ENCODE measurements at regions of chr14 and their contacts with region 1.

Region 1: DNA sequence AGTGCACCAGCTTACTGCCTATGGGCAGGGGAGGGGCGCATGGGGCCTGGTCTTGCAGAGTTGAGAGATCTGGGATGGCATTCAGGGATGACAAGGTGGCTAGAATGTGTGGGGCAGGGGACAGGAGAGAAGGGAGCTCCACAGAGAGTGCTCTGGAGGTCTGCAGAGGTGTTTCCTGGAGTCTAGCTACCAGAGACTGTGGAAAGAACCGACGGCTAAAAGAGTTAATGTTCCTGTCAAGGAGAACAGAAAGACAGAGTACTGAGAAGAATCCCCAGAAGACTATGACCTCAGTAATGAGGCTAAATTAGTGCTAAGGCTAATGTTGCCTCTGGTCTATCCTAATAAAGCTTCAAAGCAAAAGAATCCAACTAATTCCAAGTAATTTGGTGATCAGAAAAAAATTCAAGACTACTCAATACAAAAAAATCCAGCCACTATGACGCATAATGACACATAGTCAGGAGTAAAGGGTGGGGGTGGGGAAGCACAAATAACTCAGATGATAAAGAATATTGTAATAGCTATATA is 44.7 kb downstream of the FERMT2 start:
- DNase-seq: no peak

Region 2: GRCh38 chr14:52328276-52328675 is 577.9 kb before region 1 on chr14:
- intact Hi-C with region 1: no loop called
- DNase-seq: no peak

Region 3: DNA sequence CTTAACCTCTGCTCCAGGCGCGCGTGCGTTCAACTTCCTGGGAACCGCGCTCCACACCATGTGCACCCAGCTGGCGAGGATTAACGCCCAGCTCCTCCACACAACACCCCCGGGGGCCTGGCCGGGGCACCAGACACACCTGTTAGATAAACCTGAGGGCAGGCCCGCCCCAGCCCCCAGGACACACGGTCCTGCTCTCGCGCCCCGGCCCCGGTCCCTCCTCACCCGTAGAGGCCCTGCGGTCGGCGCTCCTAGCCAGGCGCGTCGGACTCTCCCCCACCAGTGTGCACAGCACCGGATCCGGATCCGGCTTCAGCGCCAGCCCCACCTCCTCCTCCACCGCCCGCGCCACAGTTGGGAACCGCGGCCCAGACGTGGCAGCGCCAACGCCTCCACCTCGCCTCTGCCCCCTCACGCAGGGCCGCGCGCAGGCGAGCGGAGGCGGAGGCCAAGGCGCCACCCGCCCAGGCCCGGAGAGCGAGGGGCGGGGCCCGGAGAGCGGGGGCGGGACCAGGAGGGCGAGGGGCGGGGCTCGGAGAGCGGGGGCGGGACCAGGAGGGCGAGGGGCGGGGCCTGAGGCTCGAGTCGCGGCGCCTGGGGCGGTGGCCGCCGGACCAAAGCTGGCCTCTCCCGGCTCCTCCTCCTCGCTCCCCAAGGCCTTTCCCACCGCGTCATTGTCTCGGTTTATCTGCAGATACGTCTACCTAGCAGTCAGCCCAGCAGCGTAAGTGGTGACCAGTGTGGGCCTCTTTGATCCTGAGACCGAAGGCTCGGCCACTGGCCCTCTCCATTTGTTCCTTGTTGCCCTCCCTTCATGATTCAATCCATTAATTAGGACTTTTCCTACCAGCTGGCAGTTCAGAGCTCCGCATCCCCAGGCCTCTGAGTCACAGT is 114.7 kb before region 1 on chr14 and contains the start of gene GNPNAT1:
- intact Hi-C with region 1: no loop called
- DNase-seq: peak; percentile 96
- total RNA-seq, gene GNPNAT1: 18.3 to 34.4 TPM

Region 4: GRCh38 chr14:52934762-52935161 is 28.6 kb after region 1 on chr14:
- intact Hi-C with region 1: loop called in 1 of 2 experiments (anchors 1 kb)
- DNase-seq: no peak

Region 5: GRCh38 chr14:52950898-52951689 is 45.0 kb after region 1 on chr14 and contains the start of gene FERMT2:
- intact Hi-C with region 1: loop called in 1 of 2 experiments (anchors 10 kb)
- DNase-seq: peak; percentile 95
- total RNA-seq, gene FERMT2: 295 to 326 TPM

Region 6: DNA sequence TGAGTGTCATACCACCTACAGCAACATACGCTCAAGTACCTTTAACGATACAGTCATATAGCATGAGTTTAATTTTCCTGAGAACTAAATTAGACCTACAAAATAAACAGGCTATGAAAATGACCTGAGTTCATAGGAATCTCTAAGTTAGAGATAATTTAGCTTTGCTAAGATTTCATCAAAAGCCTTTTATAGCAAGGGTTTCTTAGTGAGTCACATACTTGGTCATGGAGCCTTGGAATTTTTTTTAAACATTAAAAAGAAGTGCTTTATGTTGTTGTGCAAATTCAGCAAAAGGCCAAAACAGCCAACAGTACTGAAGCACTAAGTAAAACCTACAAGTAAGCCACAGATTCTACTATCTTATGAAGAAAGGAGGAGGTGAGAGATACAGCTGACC is 138.3 kb after region 1 on chr14:
- intact Hi-C with region 1: no loop called
- DNase-seq: no peak

Measured in posterior vena cava (tissue), 2 donors.